ENCODE measurements at regions of chr3 and their contacts with region 1.

Region 1: GRCh38 chr3:49013755-49014628 is 4.4 kb downstream of the DALRD3 start:
- DNase-seq: peak; percentile 67
- ATAC-seq: peak; percentile 51
- H3K4me3 Mint-ChIP-seq: no peak overlapping the region
- H3K27ac Mint-ChIP-seq: no peak overlapping the region
- H3K4me1 Mint-ChIP-seq: peaks cover 11% of the 10 kb centered on the region
- H3K27me3 Mint-ChIP-seq: no peaks in the 10 kb centered on the region
- CTCF ChIP-seq: peak; percentile 45

Region 2: DNA sequence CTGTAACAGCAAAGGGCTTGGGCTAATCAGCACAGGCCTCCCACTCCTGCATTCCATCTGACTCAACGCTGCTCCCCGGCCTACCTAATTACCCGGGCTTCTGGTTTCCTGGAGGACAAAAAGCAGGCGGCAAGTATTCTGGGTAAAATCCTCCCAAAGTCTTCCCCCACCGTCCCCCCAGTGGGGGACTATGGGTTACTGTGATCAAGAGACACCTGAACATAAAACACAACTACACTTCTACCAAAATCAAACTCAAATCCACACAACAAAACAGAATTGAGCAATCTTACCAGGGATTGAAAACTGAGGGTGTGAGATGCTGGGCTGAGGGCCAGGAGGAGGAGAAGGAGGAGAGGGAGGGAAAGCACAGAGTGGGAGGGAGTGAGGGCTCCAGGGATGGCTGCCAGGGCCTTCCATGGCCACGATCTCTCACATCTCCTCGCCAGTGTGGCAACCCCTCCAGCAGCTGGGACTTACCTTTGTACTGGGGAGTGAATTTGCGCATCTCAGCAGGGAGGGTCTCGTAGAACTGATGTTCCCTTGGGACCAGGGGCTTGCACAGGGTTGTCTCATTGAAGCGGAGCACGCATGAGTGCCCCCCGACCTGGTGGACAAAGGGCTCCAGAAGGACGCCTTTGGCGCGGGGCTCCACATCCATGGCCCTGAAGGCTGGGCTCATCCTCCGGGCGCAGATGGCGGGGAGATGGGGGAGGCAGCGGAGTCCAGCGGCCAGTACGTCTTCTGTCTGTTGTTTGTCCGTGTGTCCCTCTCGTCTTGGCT is 319.2 kb before region 1 on chr3:
- CTCF ChIA-PET with region 1: no interaction called
- POLR2A ChIA-PET with region 1: no interaction called
- intact Hi-C with region 1: no loop called
- DNase-seq: no peak
- ATAC-seq: no peak
- H3K4me3 Mint-ChIP-seq: no peak overlapping the region
- H3K27ac Mint-ChIP-seq: peak overlapping the region; percentile 40
- H3K4me1 Mint-ChIP-seq: peaks cover 18% of the 10 kb centered on the region
- H3K27me3 Mint-ChIP-seq: no peaks in the 10 kb centered on the region
- CTCF ChIP-seq: no peak

Region 3: DNA sequence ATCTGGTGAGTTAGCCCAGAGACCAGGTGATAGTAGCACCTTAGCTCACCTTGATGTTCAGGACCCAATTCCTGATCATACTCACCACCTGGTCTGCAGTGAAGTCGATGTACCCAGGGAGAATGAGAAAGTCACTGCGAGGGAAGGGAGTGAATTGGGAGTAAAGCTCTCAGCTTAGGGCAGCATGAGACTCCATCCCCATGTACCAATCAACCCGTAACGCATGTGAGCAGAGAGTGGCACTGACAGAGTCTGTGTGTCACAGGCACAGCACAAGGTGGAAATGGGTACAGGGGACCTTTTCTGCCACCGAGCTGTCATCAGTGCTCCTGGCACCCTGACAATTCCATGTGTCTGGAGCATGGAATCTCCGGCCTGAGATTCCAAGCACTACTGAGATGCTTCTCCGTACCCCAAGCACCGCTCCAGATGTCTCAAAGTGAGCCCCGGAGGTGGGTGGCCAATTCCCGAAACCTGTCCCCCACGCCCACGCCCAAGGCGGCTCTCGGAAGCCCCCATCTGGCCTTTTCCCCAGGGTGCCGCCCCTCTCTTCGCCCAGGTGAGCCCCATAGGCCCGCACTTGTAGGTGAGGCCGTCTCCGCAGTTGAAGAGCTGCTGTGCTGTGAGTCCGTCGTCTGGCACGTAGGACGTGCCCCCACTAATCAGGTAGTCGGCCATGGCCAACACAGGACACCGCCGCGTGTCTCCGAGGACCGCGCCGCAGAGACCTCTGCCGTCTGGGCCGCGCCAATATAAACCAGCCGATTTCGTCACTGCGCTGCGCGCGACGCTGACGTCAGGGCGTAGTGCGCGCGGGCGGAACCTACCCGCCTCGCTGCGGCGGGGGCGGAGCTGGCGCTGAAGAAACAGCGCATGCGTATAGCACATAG is 14.9 kb after region 1 on chr3 and contains the start of gene IMPDH2:
- CTCF ChIA-PET with region 1: interaction called, 4 read pairs
- POLR2A ChIA-PET with region 1: interaction called, 200 read pairs
- intact Hi-C with region 1: no loop called
- DNase-seq: peak; percentile 95
- ATAC-seq: peak; percentile 95
- H3K4me3 Mint-ChIP-seq: peak within 1 kb of the TSS; percentile 88
- H3K27ac Mint-ChIP-seq: peak within 1 kb of the TSS; percentile 92
- H3K4me1 Mint-ChIP-seq: peaks cover 43% of the 10 kb centered on the region
- H3K27me3 Mint-ChIP-seq: no peaks in the 10 kb centered on the region
- CTCF ChIP-seq: no peak
- total RNA-seq, gene IMPDH2: 535 to 557 TPM

Measured in activated CD8-positive, alpha-beta T cell treated with anti-CD3 and anti-CD28 coated beads for 36 hours (primary cell).